Right ventricle myocardium superior (tissue), 1 donor: ENCODE measurements at regions of chr12 and their contacts with region 1.

Region 1: GRCh38 chr12:52156736-52157565 is 34.9 kb downstream of the KRT80 start:
- DNase-seq: peak; percentile 85
- ATAC-seq: peak; percentile 81

Region 2: DNA sequence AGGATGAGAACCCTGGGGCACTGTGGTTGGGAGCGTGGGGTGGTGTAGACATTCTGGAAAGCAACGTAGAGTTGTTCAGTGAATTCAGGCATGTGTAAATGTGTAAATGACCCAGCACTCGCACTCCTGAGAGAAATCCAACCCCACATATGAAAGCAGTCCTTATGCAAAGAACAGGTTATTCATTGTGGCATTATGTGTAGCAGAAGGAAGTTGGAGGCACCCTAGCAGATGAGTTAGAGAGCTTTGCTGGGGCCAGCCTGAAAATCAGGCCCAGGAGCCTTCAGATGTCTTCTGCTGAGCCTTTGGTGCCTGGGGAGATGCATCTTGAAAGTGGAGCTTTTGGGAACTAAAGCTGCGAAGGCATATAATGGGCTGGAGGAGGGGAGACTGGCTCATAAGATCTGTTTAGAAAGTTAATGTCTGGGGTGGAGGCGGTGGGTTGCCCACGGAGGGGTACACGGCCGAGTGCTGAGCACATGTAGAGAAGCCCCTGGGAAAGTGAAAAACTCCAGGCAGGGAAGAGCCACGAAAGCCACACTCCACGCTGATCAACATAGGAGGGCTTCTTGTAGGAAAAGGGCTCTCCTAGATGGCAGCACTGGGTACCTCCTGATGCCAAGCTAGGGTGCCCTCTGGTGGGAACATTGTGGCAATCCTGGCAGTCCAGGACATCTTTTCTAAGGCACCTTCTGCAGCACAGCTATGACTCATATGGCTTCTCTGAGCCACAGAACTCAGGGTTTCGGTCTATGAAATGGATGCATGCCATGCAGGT is 170.3 kb after region 1 on chr12:
- intact Hi-C with region 1: loop called (anchors 5 kb)
- DNase-seq: peak; percentile 61
- ATAC-seq: peak; percentile 93

Region 3: GRCh38 chr12:52582971-52583456 is 426.1 kb after region 1 on chr12:
- intact Hi-C with region 1: loop called (anchors 10 kb)
- DNase-seq: no peak
- ATAC-seq: peak; percentile 90

Region 4: GRCh38 chr12:52879394-52880351 is 722.7 kb after region 1 on chr12:
- intact Hi-C with region 1: loop called (anchors 2 kb)
- DNase-seq: peak; percentile 86
- ATAC-seq: peak; percentile 92

Region 5: GRCh38 chr12:52980693-52981423 is 823.9 kb after region 1 on chr12:
- intact Hi-C with region 1: loop called (anchors 10 kb)
- DNase-seq: peak; percentile 89
- ATAC-seq: peak; percentile 96